Right ventricle myocardium inferior (tissue), 1 donor: ENCODE measurements at regions of chr7 and their contacts with region 1.

Region 1: DNA sequence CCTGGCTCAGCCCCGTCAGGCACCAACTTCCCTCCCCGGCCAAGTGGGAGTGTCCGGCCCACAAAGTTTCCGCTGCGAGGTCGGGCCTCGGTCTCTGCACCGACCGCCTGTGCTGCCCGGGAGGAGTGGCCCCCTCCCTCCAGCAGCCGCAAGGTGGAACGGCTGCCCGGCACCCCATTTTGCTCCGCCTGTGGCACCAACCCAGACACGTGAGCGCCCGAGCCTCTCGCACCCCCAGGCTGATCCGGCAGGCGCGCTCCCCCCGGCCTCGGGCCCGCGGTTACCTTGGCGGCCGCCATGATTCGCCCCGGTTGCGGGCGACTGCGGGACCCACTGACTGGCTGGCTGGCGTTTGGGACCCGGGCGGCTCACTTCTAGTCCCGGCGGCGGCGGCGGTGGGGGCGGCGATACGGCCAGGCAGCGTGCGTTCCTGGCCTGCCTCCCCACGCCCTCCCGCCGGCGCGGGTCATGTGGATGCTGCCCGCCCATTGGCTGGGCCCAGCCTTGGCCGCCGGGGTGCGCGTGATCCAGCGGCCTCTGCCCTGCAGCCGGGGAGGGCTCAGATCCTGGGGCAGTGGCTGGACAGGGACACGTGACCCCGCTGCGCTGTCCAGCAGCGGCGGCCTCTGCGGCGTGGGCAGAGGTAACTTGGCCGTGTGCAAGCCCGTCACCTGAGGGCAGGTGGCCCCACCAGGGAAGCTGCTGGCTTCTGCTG is at the start of gene SLC25A13:
- DNase-seq: peak; percentile 97
- ATAC-seq: peak; percentile 99
- total RNA-seq, gene SLC25A13: 10.7 TPM

Region 2: GRCh38 chr7:96236198-96237039 is 85.4 kb before region 1 on chr7:
- intact Hi-C with region 1: loop called (anchors 5 kb)
- DNase-seq: peak; percentile 57
- ATAC-seq: peak; percentile 90

Region 3: GRCh38 chr7:96285579-96285978 is 36.2 kb before region 1 on chr7:
- intact Hi-C with region 1: no loop called
- DNase-seq: no peak
- ATAC-seq: no peak

Region 4: DNA sequence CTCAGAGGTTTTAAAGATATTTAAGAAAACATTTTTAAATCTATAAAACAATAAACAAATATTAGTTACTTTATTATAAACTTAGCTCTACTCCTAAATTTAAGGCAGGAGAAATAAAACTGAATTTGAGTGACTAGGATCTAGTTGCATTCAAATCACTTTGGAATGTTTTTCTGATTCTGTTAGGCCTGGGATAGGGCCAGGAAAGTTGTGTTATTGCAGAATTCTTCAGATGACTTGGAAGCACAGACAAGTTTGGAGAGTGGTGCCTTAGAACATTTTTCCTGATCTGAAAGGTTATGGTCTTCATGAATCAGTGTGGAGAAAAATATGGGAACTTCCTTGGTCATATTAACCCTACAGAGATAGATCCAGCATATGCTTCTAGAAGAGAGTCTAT is 15.7 kb after region 1 on chr7:
- intact Hi-C with region 1: no loop called
- DNase-seq: no peak
- ATAC-seq: no peak

Region 5: GRCh38 chr7:96414931-96415292 is 93.1 kb after region 1 on chr7:
- intact Hi-C with region 1: loop called (anchors 10 kb)
- DNase-seq: no peak
- ATAC-seq: no peak

Region 6: GRCh38 chr7:96471606-96472005 is 149.8 kb after region 1 on chr7:
- intact Hi-C with region 1: no loop called
- DNase-seq: no peak
- ATAC-seq: no peak

Region 7: DNA sequence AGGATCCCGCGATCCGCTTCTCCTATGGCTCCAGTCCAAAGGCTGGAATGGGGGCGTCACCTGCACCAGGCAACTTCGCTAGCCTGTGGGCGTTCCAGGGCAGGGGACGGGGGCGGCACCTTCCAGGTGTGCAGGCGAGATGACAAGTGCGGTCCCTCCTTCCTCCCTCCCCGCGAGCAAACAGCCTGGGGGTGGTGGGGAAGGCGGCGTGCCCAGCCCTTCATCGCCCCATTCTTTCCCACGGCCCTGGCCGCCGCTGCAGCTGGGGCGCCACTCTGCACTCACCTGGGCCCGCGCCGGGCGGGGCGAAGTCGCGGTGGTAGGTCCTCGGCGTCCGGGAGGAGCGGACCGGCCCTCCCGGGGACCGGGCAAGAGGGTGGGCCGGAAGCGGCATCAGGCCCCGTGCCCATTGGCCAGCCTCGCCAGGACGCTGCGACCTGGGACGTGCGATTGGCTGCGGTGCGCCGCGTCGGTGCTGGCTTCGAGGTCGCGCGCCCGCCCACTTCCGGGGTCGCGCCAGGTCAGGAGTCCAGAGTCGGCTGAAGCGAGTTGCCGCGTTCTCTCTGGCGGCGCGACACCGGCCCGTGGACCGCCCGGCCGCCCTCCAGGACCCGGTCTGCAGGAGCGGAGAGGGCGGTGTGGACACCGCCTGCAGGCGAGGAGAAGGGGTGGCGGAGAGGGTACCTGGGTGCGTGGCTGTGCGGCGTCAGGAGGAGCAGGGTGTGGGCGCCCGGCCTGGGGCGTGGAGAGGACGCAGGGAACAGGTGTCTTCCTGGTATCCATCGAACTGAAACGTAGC is 1930.2 kb after region 1 on chr7 and contains the start of gene TECPR1:
- intact Hi-C with region 1: loop called (anchors 10 kb)
- DNase-seq: peak; percentile 98
- ATAC-seq: peak; percentile 100
- total RNA-seq, gene TECPR1: 20.9 TPM